HEK293 (cell line): ENCODE measurements at regions of chr4 and their contacts with region 1.

Region 1: DNA sequence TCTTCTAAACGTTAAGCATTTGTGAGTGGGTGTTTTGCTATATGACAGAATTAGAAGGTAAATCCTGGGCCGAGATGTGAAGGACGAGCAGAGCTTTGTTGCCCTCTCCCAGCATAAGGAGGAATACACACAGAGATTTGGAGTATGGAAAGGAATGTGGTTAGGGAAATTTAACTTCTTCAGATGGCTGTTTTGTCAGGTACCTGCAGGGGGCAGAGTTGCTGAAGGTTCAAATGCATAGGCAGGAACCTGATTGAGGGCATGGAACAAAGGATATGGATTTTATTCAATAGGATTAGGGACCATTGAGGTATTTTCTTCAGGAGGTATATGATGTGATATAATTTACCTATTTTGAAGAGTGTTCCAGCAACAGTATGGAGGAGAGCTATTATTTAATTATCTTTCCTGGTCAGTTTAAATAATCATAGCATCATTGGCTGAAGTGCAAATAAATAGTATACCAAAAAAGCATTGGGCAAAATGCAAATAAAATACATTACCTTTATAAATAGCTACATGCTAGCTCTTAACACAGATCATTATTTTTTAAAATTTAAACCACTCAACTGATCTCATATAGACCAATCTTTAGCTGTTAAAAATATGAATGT is 143.6 kb downstream of the SLIT2 start:
- H3K4me3 ChIP-seq: no peak overlapping the region
- H3K27ac ChIP-seq: no peak overlapping the region
- H3K4me1 ChIP-seq: no peaks in the 10 kb centered on the region
- CTCF ChIP-seq: no peak

Region 2: GRCh38 chr4:20383283-20383682 is 12.0 kb before region 1 on chr4:
- CTCF ChIA-PET with region 1: interaction called, 13 read pairs
- POLR2A ChIA-PET with region 1: no interaction called
- H3K4me3 ChIP-seq: no peak overlapping the region
- H3K27ac ChIP-seq: no peak overlapping the region
- H3K4me1 ChIP-seq: no peaks in the 10 kb centered on the region
- CTCF ChIP-seq: no peak

Region 3: DNA sequence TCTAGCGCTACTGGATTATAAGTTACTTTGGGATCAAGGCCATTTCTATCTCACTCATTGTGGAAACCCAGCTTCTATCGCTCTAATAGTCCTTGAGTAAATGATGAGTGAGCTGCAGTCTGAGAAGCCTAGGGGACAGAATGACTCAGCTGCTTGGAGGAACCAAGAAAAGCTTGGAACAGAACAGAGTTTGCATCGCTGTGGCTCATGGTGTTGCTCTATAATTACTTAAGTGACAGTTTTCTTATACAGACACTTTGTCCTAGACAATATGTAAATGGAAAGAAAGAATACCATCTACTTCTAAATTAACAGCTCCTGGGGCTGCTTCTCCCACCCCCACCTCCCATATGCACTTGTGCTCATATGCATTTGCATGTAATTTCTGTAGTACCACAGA is 13.3 kb after region 1 on chr4:
- CTCF ChIA-PET with region 1: interaction called, 23 read pairs
- POLR2A ChIA-PET with region 1: no interaction called
- H3K4me3 ChIP-seq: no peak overlapping the region
- H3K27ac ChIP-seq: no peak overlapping the region
- H3K4me1 ChIP-seq: no peaks in the 10 kb centered on the region
- CTCF ChIP-seq: no peak